Gastrocnemius medialis (tissue), 4 donors: ENCODE measurements at regions of chr1 and their contacts with region 1.

Region 1: GRCh38 chr1:54413295-54413694 is 7.1 kb upstream of the SSBP3 start:
- DNase-seq: no peak
- ATAC-seq: peak in 1 of 2 donors; percentile 34
- H3K4me3 ChIP-seq: no peak overlapping the region
- H3K27ac ChIP-seq: peak overlapping the region; percentile 18 to 64 (median 48)
- H3K4me1 ChIP-seq: peaks cover 5 to 10% of the 10 kb centered on the region in 2 donors
- H3K27me3 ChIP-seq: no peaks in the 10 kb centered on the region
- CTCF ChIP-seq: no peak
- POLR2A ChIP-seq: no peak

Region 2: DNA sequence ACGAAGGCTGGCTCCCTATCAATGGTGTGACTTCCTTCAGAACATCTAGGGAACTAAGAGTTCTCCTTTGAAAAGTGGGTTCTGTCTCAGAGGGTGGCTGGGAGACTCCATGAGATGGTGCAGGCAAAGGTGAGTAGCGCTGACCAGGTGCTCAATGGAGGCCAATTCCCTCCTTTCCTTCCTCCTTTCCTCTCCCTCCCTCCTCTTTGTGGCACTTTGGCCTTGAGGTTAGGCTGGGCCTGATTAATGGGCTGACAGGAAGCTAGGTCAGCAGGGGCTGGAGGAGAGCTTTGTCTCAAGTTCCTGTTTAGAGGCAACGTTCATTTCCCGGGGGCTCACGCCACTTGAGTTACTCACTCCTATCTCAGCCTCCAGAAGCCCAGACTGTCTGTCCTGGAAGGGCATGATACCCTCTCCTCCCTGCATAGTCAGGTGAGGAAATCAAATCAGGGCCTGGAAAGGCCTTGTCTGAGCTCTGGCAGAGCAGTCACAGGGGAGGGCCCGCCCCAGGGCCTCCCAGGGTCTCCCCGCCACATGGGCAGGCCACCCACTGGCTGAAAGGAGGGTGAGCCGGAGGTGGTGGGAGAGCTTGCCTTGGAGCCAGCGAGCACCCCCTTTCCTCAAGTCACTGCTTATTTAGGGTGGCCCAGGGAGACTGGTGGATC is 51.3 kb after region 1 on chr1:
- in situ Hi-C with region 1: no loop called
- intact Hi-C with region 1: no loop called
- DNase-seq: no peak
- ATAC-seq: no peak
- H3K4me3 ChIP-seq: no peak overlapping the region
- H3K27ac ChIP-seq: no peak overlapping the region
- H3K4me1 ChIP-seq: peaks cover 0 to 4% of the 10 kb centered on the region in 2 donors
- H3K27me3 ChIP-seq: no peaks in the 10 kb centered on the region
- CTCF ChIP-seq: no peak
- POLR2A ChIP-seq: no peak

Region 3: GRCh38 chr1:54474639-54475251 is 61.5 kb after region 1 on chr1:
- in situ Hi-C with region 1: loop called in 1 of 4 experiments (anchors 5 kb)
- intact Hi-C with region 1: no loop called
- DNase-seq: no peak
- ATAC-seq: peak; percentile 36 to 41
- H3K4me3 ChIP-seq: peak overlapping the region; percentile 16 to 55 (median 32)
- H3K27ac ChIP-seq: no peak overlapping the region
- H3K4me1 ChIP-seq: peaks cover 11% of the 10 kb centered on the region in 2 donors
- H3K27me3 ChIP-seq: no peaks in the 10 kb centered on the region
- CTCF ChIP-seq: no peak
- POLR2A ChIP-seq: no peak

Region 4: GRCh38 chr1:54480525-54480848 is 67.2 kb after region 1 on chr1:
- in situ Hi-C with region 1: loop called in 3 of 4 experiments (anchors 5 kb)
- intact Hi-C with region 1: no loop called
- DNase-seq: no peak
- ATAC-seq: no peak
- H3K4me3 ChIP-seq: no peak overlapping the region
- H3K27ac ChIP-seq: no peak overlapping the region
- H3K4me1 ChIP-seq: peaks cover 9 to 20% of the 10 kb centered on the region in 2 donors
- H3K27me3 ChIP-seq: no peaks in the 10 kb centered on the region
- CTCF ChIP-seq: no peak
- POLR2A ChIP-seq: no peak